A549 (cell line): ENCODE measurements at regions of chr1 and their contacts with region 1.

Region 1: GRCh38 chr1:181021811-181022434 is 747 bp downstream of the STX6 start:
- DNase-seq: peak; percentile 39 to 63
- ATAC-seq: peak; percentile 48 to 59
- H3K4me3 ChIP-seq: peak overlapping the region; percentile 76
- H3K27ac ChIP-seq: peak overlapping the region; percentile 88 to 98
- H3K4me1 ChIP-seq: peaks cover 11% of the 10 kb centered on the region; the same call in 2 of the 3 replicates
- CTCF ChIP-seq: no peak
- EP300 ChIP-seq: no peak
- POLR2A ChIP-seq: no peak
- RAD21 ChIP-seq: no peak

Region 2: DNA sequence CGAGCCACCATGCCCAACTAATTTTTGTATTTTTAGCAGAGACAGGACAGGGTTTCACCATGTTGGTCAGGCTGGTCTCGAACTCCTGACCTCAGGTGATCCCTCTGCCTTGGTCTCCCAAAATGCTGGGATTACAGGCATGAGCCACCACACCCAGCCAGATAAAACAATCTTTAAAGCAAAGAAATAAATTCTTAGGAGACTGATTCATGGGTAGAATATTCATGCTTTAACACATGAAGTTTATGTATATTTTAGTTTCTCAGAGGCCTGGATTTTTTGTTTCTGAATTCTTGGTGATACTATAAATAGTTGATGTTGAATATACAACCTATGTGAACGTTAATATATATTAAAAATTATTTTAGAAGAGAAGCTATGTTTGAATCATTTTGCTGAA is 236.6 kb before region 1 on chr1:
- CTCF ChIA-PET with region 1: no interaction called
- POLR2A ChIA-PET with region 1: no interaction called
- DNase-seq: no peak
- ATAC-seq: no peak
- H3K4me3 ChIP-seq: no peak overlapping the region
- H3K27ac ChIP-seq: 0 out of 6 replicates have a peak overlapping the region, but pooled peaks of 1 of the 2 experiments have one; percentile 26
- H3K4me1 ChIP-seq: peaks cover 11% of the 10 kb centered on the region
- CTCF ChIP-seq: no peak
- EP300 ChIP-seq: no peak
- POLR2A ChIP-seq: no peak
- RAD21 ChIP-seq: no peak

Region 3: DNA sequence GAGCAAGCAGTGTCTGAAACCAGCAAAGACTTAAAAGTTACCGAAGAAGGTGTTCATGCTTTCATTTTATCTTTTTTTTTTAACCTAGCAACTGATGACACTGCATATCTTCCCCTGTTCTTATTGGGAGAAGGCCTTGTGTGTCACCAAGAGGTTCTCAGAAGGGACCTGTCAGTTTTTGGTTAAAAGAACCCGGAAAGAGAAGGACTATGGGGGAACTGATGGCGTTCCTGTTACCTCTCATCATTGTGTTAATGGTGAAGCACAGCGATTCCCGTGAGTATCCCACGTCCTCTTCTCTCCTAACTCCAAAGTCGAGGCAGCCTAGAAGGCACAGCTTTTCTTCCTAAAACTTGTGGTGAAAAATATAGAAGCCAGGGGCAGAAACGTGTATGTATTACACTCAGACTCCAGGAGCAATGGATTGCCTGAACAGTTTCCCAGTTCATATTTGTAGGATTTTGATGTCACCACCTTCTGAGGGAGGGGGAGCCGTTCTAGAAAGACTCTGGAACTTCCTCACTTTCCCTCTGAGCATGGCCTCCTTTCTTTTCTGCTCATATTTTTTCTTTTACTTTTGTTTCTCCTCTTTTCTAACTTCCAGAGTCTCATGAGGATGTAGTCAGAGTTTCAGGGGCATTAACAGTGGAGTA is 12.0 kb after region 1 on chr1 and contains the start of gene MR1:
- CTCF ChIA-PET with region 1: interaction called, 6 read pairs
- POLR2A ChIA-PET with region 1: interaction called, 10 read pairs
- DNase-seq: peak; percentile 71 to 84
- ATAC-seq: peak; percentile 93 to 96
- H3K4me3 ChIP-seq: peak within 1 kb of the TSS; percentile 43
- H3K27ac ChIP-seq: peak within 1 kb of the TSS; percentile 69 to 84
- H3K4me1 ChIP-seq: peaks cover 13% of the 10 kb centered on the region; the same call in 2 of the 3 replicates
- CTCF ChIP-seq: no peak
- EP300 ChIP-seq: no peak
- POLR2A ChIP-seq: no peak
- RAD21 ChIP-seq: no peak
- polyA plus RNA-seq, gene MR1: 17.2 and 20.8 TPM in 2 replicates

Region 4: DNA sequence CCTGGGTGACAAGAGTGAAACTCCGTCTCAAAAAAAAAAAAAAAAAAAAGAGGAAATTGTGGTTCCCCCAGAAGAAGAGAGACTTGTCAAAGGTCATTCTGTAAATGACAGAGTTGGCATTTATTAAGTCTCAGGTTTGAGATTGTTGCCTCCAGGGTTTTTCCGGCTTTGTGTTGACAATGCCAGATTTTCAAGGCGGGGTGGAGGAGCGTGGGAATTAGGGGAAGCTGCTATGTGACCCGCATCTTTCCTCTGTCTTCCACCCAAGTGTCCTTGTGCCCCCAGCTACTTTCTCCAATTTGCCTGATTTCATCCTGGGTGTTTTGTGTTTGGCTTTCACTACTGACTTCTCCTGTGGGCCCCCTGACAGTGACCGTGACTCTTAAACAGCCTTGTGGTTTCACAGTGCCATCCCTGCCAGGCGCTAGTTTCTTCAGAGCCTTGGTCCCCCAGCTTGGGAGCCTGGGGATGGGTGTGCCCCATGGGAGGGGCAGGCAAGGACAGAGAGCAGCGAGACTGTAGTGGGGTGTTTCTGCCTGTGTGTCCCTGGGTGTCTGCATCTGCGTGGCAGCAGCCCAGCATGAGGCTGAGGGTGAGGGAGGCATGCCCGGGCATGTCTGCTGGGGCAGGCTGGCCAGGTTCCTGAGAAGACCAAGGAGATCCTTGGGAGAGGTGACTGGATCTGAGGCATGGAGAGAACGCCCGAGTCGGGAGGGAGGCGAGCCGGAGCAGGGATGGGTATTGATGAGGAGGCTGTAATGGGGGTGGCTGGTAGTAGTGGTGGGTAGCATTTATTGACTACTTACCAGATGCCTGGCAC is 112.8 kb after region 1 on chr1:
- CTCF ChIA-PET with region 1: interaction called, 3 read pairs
- POLR2A ChIA-PET with region 1: interaction called, 10 read pairs
- DNase-seq: peak in 1 of 2 experiments; percentile 77
- ATAC-seq: peak; percentile 54 to 62
- H3K4me3 ChIP-seq: no peak overlapping the region
- H3K27ac ChIP-seq: peak overlapping the region; percentile 92 to 98
- H3K4me1 ChIP-seq: peaks cover 62% of the 10 kb centered on the region
- CTCF ChIP-seq: no peak
- EP300 ChIP-seq: no peak
- POLR2A ChIP-seq: no peak
- RAD21 ChIP-seq: no peak